ENCODE measurements at regions of chr20 and their contacts with region 1.

Region 1: DNA sequence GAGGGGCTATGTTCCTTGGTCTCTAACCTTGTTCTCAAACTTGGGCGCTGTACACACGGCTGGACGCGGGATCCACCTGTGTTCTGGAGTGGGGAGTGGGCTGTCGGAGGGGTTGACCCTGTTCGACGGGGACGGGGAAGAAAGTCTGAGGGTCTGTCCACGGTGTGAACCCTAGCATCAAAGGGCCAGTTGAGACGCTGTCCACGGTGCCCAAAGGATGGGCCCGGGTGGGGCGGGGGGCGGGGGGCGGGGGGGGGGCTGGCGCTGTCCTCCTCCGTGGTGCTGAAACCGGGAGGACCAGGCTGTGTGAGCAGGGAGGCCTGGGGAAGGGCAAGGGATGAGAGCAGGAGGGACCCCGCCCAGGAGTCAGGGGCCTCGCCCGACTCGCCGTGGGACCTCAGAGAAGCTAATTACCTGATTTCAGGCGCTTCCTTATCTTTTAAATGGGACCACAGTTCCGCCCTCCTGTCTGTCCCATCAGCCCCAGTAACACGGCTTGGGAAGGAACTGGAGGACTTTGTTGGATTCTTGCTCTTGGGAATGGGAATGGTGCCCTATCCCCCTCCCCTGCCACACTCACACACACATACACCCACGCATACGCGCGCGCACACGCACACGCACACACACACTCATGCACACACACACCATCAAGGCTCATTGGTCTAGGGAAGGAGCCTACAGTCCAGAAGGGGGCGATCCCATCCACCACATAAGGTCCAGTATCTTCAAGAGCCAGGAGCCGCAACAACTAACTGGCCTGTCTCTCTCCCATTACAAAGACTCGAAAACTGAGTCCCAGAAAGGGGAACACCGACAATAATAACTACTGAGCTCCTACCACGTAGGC is 1.0 kb upstream of the VSTM2L start:
- DNase-seq: peak; percentile 80 to 89 (median 86)
- ATAC-seq: peak; percentile 91
- H3K4me3 ChIP-seq: no peak overlapping the region
- H3K27ac ChIP-seq: no peak overlapping the region
- H3K4me1 ChIP-seq: peaks cover 0 to 16% of the 10 kb centered on the region in 2 experiments; a peak in 2 of 5 replicates
- H3K27me3 ChIP-seq: peaks cover 9 to 43% of the 10 kb centered on the region in 2 experiments; a peak in 4 of 5 replicates
- CTCF ChIP-seq: peak; percentile 67 to 73 (median 71)
- EP300 ChIP-seq: no peak
- POLR2A ChIP-seq: no peak
- RAD21 ChIP-seq: peak; percentile 20 to 75; a peak in 3 of 4 replicates

Region 2: GRCh38 chr20:37131486-37131885 is 770.4 kb before region 1 on chr20:
- CTCF ChIA-PET with region 1: no interaction called
- POLR2A ChIA-PET with region 1: no interaction called
- in situ Hi-C with region 1: no loop called
- intact Hi-C with region 1: no loop called
- DNase-seq: no peak
- ATAC-seq: no peak
- H3K4me3 ChIP-seq: no peak overlapping the region
- H3K27ac ChIP-seq: no peak overlapping the region
- H3K4me1 ChIP-seq: no peaks in the 10 kb centered on the region
- H3K27me3 ChIP-seq: no peaks in the 10 kb centered on the region; a peak in 2 of 5 replicates
- CTCF ChIP-seq: no peak
- EP300 ChIP-seq: no peak
- POLR2A ChIP-seq: no peak
- RAD21 ChIP-seq: no peak

Region 3: DNA sequence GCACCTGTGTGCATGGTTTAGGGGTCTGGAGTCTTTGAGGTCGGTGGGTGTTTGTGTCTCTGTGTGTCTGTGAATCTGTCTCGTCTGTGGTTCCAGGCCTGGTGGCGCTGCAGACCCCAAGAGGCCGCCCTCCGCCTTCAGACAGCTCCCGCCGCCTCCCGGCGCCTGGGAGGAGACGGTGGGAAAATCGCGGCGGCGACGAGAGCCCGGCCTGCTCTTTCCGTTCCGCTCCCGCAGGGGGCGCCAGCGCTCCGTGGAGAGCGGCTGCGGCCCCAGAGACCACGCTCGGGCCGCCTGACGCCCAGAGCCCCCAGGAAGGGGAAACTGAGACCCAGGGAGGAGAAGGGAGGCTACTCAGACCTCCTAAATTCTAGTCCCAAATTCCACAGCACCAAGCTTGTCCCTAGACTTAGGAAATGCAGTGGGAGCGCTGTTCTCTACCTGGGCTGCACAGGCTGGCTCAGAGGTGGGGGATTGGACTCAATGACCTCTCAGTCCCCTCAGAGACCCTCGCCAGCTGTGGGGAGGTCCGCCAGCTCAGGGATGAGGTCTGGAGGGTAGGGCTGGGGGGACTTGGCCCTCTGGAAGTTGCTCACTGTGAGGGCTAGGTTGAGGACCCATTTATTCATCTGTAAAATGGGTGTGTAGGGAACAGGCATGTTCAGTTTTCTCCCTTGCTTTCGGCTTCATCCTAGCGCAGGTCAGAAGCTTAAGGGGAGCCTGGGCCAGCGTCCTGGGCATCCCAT is 337.3 kb before region 1 on chr20:
- CTCF ChIA-PET with region 1: no interaction called
- POLR2A ChIA-PET with region 1: no interaction called
- in situ Hi-C with region 1: loop called (anchors 10 kb)
- intact Hi-C with region 1: loop called (anchors 5 kb)
- DNase-seq: peak; percentile 62 to 82 (median 78)
- ATAC-seq: peak; percentile 88
- H3K4me3 ChIP-seq: no peak overlapping the region
- H3K27ac ChIP-seq: no peak overlapping the region
- H3K4me1 ChIP-seq: peaks cover 10 to 16% of the 10 kb centered on the region in 2 experiments; a peak in 4 of 5 replicates
- H3K27me3 ChIP-seq: peaks cover 5 to 30% of the 10 kb centered on the region in 2 experiments; a peak in 3 of 5 replicates
- CTCF ChIP-seq: peak; percentile 88 to 94 (median 89)
- EP300 ChIP-seq: no peak
- POLR2A ChIP-seq: no peak
- RAD21 ChIP-seq: peak; percentile 92

Region 4: GRCh38 chr20:37651932-37652331 is 249.9 kb before region 1 on chr20:
- CTCF ChIA-PET with region 1: no interaction called
- POLR2A ChIA-PET with region 1: no interaction called
- in situ Hi-C with region 1: no loop called
- intact Hi-C with region 1: loop called (anchors 10 kb)
- DNase-seq: peak in 3 of 4 experiments; percentile 24 to 30 (median 27)
- ATAC-seq: peak; percentile 74
- H3K4me3 ChIP-seq: no peak overlapping the region
- H3K27ac ChIP-seq: no peak overlapping the region
- H3K4me1 ChIP-seq: no peaks in the 10 kb centered on the region
- H3K27me3 ChIP-seq: peaks cover 6 to 26% of the 10 kb centered on the region in 2 experiments; a peak in 4 of 5 replicates
- CTCF ChIP-seq: peak; percentile 59 to 66 (median 60)
- EP300 ChIP-seq: no peak
- POLR2A ChIP-seq: no peak
- RAD21 ChIP-seq: peak; percentile 44 to 77

Region 5: GRCh38 chr20:37755665-37756064 is 146.2 kb before region 1 on chr20:
- CTCF ChIA-PET with region 1: no interaction called
- POLR2A ChIA-PET with region 1: no interaction called
- in situ Hi-C with region 1: no loop called
- intact Hi-C with region 1: loop called (anchors 1 kb)
- DNase-seq: peak in 2 of 4 experiments; percentile 14 to 17
- ATAC-seq: peak; percentile 73
- H3K4me3 ChIP-seq: no peak overlapping the region
- H3K27ac ChIP-seq: no peak overlapping the region
- H3K4me1 ChIP-seq: no peaks in the 10 kb centered on the region
- H3K27me3 ChIP-seq: no peaks in the 10 kb centered on the region
- CTCF ChIP-seq: peak; percentile 23 to 48 (median 32); a peak in 3 of 6 replicates
- EP300 ChIP-seq: no peak
- POLR2A ChIP-seq: no peak
- RAD21 ChIP-seq: peak in 1 of 2 experiments; percentile 55; a peak in 3 of 4 replicates

Region 6: DNA sequence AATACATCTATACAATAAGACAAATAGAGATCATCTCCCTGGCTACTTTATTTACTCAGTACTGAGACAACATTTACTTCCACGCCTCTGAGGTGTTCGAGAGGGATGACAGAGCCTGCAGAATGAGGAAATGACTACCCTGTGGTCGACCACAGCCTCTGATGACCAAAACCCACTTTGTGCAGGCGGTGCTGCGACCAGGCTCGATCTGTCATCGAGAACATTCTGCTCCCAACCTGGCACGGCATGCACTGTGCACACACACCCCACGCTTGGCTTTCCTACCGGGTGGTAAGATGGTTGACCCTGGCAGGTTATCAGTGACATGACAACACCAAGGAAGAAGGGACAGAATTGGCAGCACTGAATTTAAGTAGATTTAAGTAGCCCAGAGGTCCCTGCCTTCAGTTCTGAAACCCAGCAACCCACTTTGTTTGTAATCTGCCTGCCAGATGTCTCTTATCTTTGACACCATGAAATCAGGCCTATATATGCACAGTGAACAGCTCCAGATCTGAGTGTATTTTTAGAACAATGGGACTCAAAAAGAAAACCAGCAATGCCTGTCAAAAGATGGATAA is 88.8 kb after region 1 on chr20:
- CTCF ChIA-PET with region 1: interaction called, 3 read pairs
- POLR2A ChIA-PET with region 1: no interaction called
- in situ Hi-C with region 1: no loop called
- intact Hi-C with region 1: loop called (anchors 1 kb)
- DNase-seq: peak in 1 of 4 experiments; percentile 42
- ATAC-seq: no peak
- H3K4me3 ChIP-seq: no peak overlapping the region
- H3K27ac ChIP-seq: no peak overlapping the region
- H3K4me1 ChIP-seq: peaks cover 8 to 10% of the 10 kb centered on the region in 2 experiments; a peak in 3 of 5 replicates
- H3K27me3 ChIP-seq: no peaks in the 10 kb centered on the region
- CTCF ChIP-seq: no peak
- EP300 ChIP-seq: no peak
- POLR2A ChIP-seq: no peak
- RAD21 ChIP-seq: no peak

Region 7: DNA sequence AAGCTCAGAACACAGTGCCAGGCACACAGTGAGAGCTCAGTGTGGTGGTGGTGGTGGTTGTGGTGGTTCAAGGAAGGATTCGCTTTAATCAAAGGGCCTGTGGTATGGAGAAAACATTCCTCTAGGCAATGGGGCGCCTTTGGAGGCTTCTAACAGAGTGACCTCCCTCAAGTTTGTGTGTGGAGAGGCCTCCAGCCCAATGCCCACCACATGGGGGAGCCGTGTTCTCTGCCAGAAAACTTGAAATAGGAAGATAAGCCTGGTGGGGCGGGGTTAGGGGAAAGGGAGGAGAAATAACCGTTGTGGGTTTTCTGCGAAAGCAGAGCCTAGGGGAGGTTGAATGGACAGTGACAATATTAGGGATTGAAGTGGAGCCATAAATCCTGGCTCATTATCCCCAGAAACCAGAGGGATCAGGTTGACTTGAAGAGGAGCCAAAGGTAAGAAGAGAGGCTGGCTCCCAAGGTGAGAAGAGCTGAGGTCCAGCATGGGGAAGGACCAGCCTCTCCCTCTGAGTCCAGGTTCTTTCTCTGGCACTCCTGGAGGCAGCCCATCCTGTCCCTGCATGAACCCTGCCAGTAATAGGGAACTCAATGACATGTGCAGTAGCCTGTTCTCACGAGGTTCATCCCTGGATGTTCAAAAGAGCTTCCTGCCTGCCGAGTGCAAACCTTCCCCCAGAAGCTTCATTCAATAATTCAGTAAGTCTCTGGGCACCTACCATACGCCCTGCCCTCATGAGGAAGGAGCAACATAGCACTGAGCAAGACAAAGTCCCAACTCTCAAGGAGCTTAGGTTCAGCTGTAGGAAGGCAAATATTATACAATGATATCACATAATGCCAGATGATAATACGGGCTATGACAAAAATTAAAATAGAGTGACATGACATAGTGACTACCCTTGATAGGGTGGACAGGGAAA is 211.8 kb after region 1 on chr20:
- CTCF ChIA-PET with region 1: no interaction called
- POLR2A ChIA-PET with region 1: no interaction called
- in situ Hi-C with region 1: no loop called
- intact Hi-C with region 1: loop called (anchors 2 kb)
- DNase-seq: peak; percentile 80 to 96 (median 84)
- ATAC-seq: peak; percentile 96
- H3K4me3 ChIP-seq: no peak overlapping the region
- H3K27ac ChIP-seq: peak overlapping the region; percentile 59
- H3K4me1 ChIP-seq: peaks cover 15 to 36% of the 10 kb centered on the region in 2 experiments
- H3K27me3 ChIP-seq: no peaks in the 10 kb centered on the region
- CTCF ChIP-seq: peak; percentile 86 to 90 (median 88)
- EP300 ChIP-seq: peak; percentile 75
- POLR2A ChIP-seq: 0 out of 2 replicates have a peak, but pooled peaks have one; percentile 27
- RAD21 ChIP-seq: peak; percentile 89 to 95